Right ventricle myocardium superior (tissue), 1 donor: ENCODE measurements at regions of chr7 and their contacts with region 1.

Region 1: DNA sequence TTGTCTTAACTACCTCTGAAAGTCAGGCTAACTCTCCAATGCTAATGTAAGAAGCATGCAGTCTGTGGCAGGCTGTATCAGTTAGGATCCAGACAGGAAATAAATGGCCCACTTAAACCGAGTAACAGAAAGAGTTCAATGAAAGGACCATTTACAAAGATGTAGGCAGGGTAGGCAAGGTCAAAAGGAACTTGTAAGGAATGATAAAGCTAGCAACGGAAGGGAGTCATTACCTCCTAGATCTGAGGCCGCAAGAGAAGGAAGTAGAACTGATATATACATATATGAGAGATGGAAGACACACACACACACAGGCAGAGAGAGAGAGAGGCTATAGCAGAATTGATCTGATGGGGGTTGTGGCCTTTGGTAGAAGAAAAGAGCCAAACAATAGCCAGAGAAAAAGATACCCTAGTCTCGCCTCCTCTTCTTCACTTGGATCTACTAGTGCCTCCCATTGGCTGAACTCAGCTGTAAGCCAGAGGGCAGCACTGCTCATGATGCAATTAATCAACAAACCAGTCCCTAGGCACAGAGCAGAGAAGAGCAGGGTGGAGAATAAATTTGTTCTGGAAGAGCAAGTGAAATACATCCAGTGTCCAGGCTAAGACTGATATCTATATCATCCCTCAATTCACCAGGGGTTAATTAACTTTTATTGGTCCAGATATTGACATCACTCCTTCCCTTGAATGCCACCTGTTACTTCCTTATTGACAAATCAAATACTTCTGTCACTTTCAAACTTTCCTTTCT is 91.2 kb downstream of the LSMEM1 start:
- DNase-seq: no peak
- ATAC-seq: no peak

Region 2: GRCh38 chr7:112898432-112899290 is 326.6 kb after region 1 on chr7:
- intact Hi-C with region 1: loop called (anchors 10 kb)
- DNase-seq: no peak
- ATAC-seq: peak; percentile 90